K562 (cell line): ENCODE measurements at regions of chr6 and their contacts with region 1.

Region 1: DNA sequence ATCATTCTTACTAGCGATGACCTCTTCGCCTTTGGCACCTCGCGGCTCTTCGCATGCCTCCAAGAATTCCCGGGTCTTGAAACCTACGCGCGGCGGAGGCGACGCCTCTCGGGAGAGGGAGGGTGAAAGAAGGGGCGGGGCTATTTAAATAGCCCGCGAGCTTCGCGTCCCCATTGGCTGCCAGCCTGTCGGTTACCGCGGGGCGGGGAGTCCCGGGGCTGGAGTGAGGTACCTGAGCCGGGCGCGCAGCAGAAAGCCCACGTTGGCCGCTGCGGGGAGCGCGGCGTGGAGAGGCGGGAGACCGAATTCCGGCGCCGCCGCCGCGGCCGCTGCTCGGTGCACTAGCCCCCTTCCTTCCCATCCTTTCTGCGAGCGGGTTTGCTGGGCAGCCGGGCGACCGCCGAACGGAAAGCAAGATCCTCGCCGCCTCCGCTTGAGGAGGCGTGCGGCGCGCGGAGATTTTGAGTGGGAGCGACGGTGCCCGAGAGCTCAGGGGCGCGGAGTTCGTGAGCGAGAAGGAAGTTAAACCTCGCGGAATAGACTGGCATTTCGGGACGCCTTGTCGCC is at the start of gene BMP6:
- DNase-seq: peak; percentile 93 to 99 (median 98)
- ATAC-seq: peak; percentile 99
- H3K4me3 ChIP-seq: peak within 1 kb of the TSS; percentile 30
- H3K27ac ChIP-seq: no peak within 1 kb of the TSS
- H3K4me1 ChIP-seq: peaks cover 0 to 30% of the 10 kb centered on the region in 2 experiments; a peak in 3 of 5 replicates
- H3K27me3 ChIP-seq: peaks cover 45 to 53% of the 10 kb centered on the region in 2 experiments
- CTCF ChIP-seq: no peak
- EP300 ChIP-seq: no peak
- POLR2A ChIP-seq: no peak
- RAD21 ChIP-seq: no peak
- polyA plus RNA-seq, gene BMP6: 0.01 TPM in 1 of 2 experiments, not detected in the other

Region 2: GRCh38 chr6:7184502-7184901 is 541.4 kb before region 1 on chr6:
- CTCF ChIA-PET with region 1: no interaction called
- POLR2A ChIA-PET with region 1: no interaction called
- in situ Hi-C with region 1: no loop called
- intact Hi-C with region 1: no loop called
- DNase-seq: no peak
- ATAC-seq: no peak; the same call in 2 of the 3 replicates
- H3K4me3 ChIP-seq: no peak overlapping the region
- H3K27ac ChIP-seq: no peak overlapping the region
- H3K4me1 ChIP-seq: peaks cover 0 to 13% of the 10 kb centered on the region in 2 experiments; a peak in 2 of 5 replicates
- H3K27me3 ChIP-seq: no peaks in the 10 kb centered on the region
- CTCF ChIP-seq: no peak
- EP300 ChIP-seq: no peak
- POLR2A ChIP-seq: no peak
- RAD21 ChIP-seq: no peak

Region 3: GRCh38 chr6:7673063-7673536 is 52.8 kb before region 1 on chr6:
- CTCF ChIA-PET with region 1: no interaction called
- POLR2A ChIA-PET with region 1: no interaction called
- in situ Hi-C with region 1: no loop called
- intact Hi-C with region 1: loop called (anchors 2 kb)
- DNase-seq: peak; percentile 48 to 64 (median 60)
- ATAC-seq: peak; percentile 89
- H3K4me3 ChIP-seq: no peak overlapping the region
- H3K27ac ChIP-seq: no peak overlapping the region
- H3K4me1 ChIP-seq: peaks cover 10 to 11% of the 10 kb centered on the region in 2 experiments
- H3K27me3 ChIP-seq: peaks cover 2 to 19% of the 10 kb centered on the region in 2 experiments; a peak in 3 of 5 replicates
- CTCF ChIP-seq: peak; percentile 20 to 58 (median 33); a peak in 3 of 6 replicates
- EP300 ChIP-seq: no peak
- POLR2A ChIP-seq: no peak
- RAD21 ChIP-seq: peak in 1 of 2 experiments; percentile 55; a peak in 2 of 4 replicates

Region 4: DNA sequence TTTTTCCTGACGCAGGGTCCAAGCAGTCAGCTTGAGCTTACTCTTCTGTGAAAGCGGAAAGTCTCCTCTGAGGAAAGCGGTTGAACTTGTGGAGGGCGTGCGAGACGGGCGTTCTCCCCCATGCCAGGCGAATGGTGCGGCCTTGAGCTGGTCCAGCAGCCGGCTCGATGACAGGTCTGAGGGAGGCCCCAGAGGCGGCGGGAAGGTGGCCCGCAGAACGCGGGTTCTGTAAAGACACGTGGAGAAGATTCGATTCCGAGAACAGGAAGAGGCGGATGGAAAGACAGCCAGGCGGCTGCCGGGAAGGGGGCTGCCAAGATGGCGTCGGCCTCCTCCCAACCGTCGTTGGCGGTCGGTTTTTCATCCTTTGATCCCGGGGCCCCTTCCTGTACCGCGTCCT is 260.3 kb after region 1 on chr6:
- CTCF ChIA-PET with region 1: no interaction called
- POLR2A ChIA-PET with region 1: no interaction called
- in situ Hi-C with region 1: loop called (anchors 5 kb)
- intact Hi-C with region 1: no loop called
- DNase-seq: no peak
- ATAC-seq: no peak
- H3K4me3 ChIP-seq: no peak overlapping the region
- H3K27ac ChIP-seq: no peak overlapping the region
- H3K4me1 ChIP-seq: peaks cover 0 to 3% of the 10 kb centered on the region in 2 experiments; a peak in 1 of 5 replicates
- H3K27me3 ChIP-seq: peaks cover 9 to 23% of the 10 kb centered on the region in 2 experiments
- CTCF ChIP-seq: no peak
- EP300 ChIP-seq: no peak
- POLR2A ChIP-seq: no peak
- RAD21 ChIP-seq: no peak

Region 5: DNA sequence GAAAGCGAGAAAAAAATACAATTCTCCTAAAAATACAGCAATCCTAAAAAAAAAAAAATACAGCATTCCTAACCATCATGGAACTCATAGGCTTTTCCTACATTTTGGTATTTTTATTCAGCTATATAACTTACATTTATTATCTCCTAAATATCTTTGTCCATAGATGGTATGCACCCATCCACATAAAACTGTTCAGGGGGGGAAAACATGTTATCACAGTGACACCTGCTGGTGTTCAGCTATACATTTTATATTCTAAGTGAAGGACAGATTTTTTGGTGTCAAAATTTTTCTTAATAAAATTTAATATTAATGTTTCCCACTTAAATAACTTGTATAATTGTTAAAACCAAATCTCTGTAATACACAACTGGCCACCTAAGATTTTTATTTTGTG is 280.3 kb after region 1 on chr6:
- CTCF ChIA-PET with region 1: interaction called, 15 read pairs
- POLR2A ChIA-PET with region 1: no interaction called
- in situ Hi-C with region 1: no loop called
- intact Hi-C with region 1: no loop called
- DNase-seq: peak; percentile 25 to 55 (median 41)
- ATAC-seq: peak; percentile 77; the same call in 2 of the 3 replicates
- H3K4me3 ChIP-seq: no peak overlapping the region
- H3K27ac ChIP-seq: no peak overlapping the region
- H3K4me1 ChIP-seq: peaks cover 0 to 2% of the 10 kb centered on the region in 2 experiments; a peak in 1 of 5 replicates
- H3K27me3 ChIP-seq: no peaks in the 10 kb centered on the region
- CTCF ChIP-seq: peak; percentile 38 to 75 (median 43); a peak in 3 of 6 replicates
- EP300 ChIP-seq: no peak
- POLR2A ChIP-seq: no peak
- RAD21 ChIP-seq: peak; percentile 82 to 88

Region 6: DNA sequence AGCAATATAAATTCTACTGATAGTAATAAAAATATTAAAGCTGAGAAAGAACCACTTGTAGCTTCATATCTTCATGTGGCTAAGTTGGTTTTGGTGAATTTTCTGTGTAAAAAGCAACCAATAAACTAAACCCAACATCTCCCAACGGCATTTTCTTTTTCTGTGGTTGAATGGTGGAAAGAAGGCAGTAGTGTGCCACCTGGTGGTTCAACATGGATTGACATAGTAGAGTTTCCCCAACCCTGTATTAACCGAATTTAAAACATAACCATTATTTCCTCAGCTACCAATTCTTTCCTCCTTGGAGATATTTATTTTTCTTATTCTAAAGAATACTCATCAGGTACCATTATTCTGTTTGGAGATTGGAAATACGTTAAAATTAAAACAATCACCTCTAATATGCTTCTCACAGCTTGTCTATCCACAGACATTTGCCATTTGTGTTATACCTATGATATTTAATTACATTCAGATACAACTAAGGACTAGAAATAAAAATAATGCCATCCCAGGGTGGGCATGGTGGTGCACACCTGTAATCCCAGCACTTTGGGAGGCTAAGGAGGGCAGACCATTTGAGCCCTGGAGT is 493.5 kb after region 1 on chr6:
- CTCF ChIA-PET with region 1: interaction called, 5 read pairs
- POLR2A ChIA-PET with region 1: no interaction called
- in situ Hi-C with region 1: no loop called
- intact Hi-C with region 1: loop called (anchors 5 kb)
- DNase-seq: peak; percentile 61 to 71 (median 62)
- ATAC-seq: peak; percentile 95
- H3K4me3 ChIP-seq: no peak overlapping the region
- H3K27ac ChIP-seq: no peak overlapping the region
- H3K4me1 ChIP-seq: no peaks in the 10 kb centered on the region
- H3K27me3 ChIP-seq: peaks cover 0 to 10% of the 10 kb centered on the region in 2 experiments; a peak in 2 of 5 replicates
- CTCF ChIP-seq: peak; percentile 69 to 84 (median 69); a peak in 5 of 6 replicates
- EP300 ChIP-seq: no peak
- POLR2A ChIP-seq: no peak
- RAD21 ChIP-seq: peak; percentile 88 to 90